BJ (cell line): ENCODE measurements at regions of chr19 and their contacts with region 1.

Region 1: DNA sequence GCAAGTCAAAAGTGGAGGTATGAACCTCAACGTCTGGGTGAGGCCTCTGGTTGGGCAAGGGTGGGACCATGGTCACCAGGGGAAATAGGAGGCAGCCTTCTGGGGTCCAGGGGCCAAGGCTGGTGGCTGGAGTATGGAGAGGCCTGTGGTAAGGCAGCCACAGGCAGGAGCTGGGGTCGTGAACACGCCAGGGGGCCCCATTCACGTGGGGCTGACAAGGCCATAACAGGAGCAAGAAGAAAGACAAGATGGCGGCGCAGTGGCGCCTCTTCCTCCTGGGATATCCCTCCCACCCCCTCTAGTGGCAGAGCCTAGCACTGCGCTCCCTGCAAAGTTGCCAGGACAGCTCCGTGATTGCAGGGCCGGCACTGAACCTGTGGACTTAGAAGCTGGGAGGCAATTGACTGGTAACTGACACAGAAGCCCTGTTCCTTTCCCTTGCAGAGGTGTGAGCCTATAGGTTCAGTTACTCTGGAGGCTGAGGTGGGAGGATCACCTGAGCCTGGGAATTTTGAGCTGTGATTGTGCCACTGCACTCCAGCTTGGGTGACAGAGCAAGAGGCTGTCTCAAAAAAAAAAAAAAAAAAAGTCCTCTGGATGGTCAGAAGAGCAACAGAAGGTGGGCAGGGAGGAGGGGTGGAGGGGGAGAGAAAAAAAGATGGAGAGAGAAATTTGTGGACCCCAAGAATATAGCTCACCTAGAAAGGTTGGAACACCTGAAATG is 19.7 kb upstream of the EDDM13 start:
- DNase-seq: no peak
- H3K4me3 ChIP-seq: no peak overlapping the region
- H3K27me3 ChIP-seq: no peaks in the 10 kb centered on the region
- CTCF ChIP-seq: peak; percentile 97

Region 2: GRCh38 chr19:56066152-56067023 is 186.5 kb before region 1 on chr19:
- CTCF ChIA-PET with region 1: interaction called, 122 read pairs
- POLR2A ChIA-PET with region 1: no interaction called
- DNase-seq: no peak
- H3K4me3 ChIP-seq: 0 out of 2 replicates have a peak overlapping the region, but pooled peaks have one; percentile 25
- H3K27me3 ChIP-seq: no peaks in the 10 kb centered on the region; the same call in 1 of the 2 replicates
- CTCF ChIP-seq: peak; percentile 88

Region 3: DNA sequence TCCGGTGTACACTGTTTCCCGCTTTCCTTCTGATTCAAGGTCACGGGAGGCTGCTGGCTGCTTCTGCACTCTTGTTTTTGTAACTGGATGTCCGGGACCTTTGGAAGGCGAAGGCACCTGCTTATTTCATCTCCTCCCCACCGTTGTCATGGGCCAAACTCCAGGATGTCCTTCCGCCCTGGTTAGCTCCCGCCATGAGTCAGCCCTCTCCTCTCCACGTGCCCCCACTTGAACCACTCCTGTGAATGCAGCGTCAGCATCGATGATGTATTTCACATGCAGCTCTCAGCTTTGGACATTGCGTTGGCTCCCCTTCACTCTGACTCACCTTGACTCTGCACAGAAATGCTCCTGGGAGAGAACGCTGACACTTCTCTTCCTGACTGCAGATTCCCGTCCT is 82.6 kb before region 1 on chr19:
- CTCF ChIA-PET with region 1: interaction called, 18 read pairs
- POLR2A ChIA-PET with region 1: no interaction called
- DNase-seq: no peak
- H3K4me3 ChIP-seq: no peak overlapping the region
- H3K27me3 ChIP-seq: no peaks in the 10 kb centered on the region
- CTCF ChIP-seq: no peak

Region 4: DNA sequence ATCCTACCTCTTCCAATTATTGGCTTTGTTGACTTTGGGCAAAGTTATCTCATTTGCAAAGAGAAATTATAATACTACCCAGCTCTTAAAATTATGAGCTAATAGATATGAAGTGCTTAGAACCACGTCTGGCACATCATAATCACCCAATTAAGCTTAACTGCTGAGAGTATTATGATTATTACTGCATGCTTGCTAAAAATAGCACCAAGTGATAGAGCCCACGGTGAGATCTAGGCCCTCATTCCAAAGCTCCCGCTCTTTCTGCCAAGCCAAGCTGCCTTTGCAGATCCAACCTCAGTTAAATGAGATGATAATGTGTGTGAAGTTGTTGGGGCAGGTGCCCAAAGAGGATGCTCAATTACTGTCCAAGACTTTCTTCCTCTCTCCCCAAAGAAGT is 13.2 kb after region 1 on chr19:
- CTCF ChIA-PET with region 1: interaction called, 65 read pairs
- POLR2A ChIA-PET with region 1: no interaction called
- DNase-seq: no peak
- H3K4me3 ChIP-seq: no peak overlapping the region
- H3K27me3 ChIP-seq: no peaks in the 10 kb centered on the region
- CTCF ChIP-seq: no peak

Region 5: DNA sequence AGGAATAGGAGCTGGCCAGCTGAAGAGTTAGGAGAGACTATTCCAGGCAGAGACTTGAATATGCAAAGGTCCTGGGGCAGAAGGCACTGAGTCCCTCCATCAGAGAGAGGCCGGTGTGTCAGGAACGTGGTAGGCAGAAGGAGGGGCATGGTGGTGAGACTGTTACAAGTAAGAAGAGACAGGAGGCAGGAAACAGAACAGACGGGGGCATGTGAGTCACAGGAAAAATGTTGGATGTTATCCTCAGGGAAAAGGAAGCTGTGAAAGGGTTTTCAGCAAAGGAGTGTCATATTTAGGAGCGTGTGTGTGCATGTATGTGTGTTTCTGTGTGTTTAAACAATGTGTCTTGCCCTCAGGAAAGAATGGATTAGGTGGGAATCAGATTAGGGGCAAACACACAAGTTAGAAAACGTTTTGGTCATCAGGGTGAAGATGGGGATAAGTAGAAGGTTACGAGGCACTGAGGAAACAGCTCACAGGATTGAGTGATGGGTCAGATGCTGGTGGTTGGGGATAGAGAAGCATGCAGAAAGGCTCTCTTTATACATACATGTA is 20.8 kb after region 1 on chr19:
- CTCF ChIA-PET with region 1: interaction called, 34 read pairs
- POLR2A ChIA-PET with region 1: no interaction called
- DNase-seq: no peak
- H3K4me3 ChIP-seq: no peak overlapping the region
- H3K27me3 ChIP-seq: no peaks in the 10 kb centered on the region
- CTCF ChIP-seq: no peak

Region 6: DNA sequence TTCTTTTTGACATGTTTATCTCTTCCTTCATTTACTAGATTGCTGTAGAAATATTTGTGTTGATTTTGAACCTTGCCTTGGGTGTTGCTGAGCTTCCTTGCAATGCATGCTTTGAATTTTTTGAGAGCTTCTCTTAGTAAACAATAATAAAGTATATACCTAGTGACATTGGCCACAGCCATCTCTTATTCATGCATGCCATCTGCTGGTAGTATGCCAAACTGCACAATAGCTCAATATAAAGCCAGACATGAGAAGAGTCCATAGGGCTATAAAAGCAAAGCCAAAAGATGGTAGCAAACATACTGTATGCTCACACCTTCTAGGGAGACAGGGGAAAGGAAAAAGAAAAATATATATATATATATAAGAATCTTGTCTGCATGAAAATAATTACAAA is 80.6 kb after region 1 on chr19:
- CTCF ChIA-PET with region 1: interaction called, 64 read pairs
- POLR2A ChIA-PET with region 1: no interaction called
- DNase-seq: no peak
- H3K4me3 ChIP-seq: no peak overlapping the region
- H3K27me3 ChIP-seq: no peaks in the 10 kb centered on the region
- CTCF ChIP-seq: peak; percentile 76

Region 7: DNA sequence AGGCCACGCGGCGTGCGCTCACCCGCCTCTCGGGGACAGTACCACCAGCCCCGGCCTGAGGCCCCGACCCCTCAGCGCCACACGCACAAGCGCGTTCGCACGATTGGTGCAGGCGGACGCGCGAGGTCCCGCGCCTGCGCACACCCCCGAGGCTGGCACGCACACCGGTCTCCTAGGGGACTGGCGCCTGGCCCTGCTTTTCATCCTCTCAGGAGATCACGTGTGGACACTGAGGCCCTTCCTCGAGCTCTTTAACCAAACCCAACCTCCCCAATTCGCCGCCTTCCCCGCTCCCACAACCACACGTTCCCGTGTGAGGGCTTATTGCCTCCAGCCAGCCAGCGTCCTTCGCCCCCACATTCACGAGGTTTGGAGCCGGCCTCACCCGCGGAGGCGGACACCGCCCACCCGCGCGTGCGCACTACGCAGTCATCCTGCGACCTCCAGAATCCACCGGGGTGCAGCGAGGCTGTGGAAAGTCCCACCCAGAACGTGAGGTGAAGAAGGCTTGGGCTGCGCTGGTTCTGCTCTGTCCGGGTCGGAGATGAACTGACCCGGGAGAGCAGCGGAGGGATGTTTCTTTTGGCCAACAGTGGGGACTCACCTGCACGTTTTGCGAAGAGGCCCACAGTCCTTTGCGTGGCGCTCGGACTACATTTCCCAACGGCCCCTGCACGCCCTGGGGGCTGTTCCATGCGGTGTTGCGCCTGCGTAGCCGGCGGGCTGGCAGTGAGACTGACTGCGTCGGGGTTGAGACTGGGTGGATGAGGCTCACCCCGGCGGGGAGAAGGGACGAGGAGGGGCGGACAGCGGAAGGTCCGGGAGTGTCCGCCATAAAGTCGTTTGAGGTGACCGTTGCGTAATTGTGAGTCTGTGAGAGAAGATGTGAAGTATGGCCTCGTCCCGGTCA is 224.8 kb after region 1 on chr19:
- CTCF ChIA-PET with region 1: no interaction called
- POLR2A ChIA-PET with region 1: no interaction called
- DNase-seq: peak; percentile 63
- H3K4me3 ChIP-seq: peak overlapping the region; percentile 82
- H3K27me3 ChIP-seq: no peaks in the 10 kb centered on the region
- CTCF ChIP-seq: no peak